Right ventricle myocardium inferior (tissue), 1 donor: ENCODE measurements at regions of chr22 and their contacts with region 1.

Region 1: GRCh38 chr22:40238425-40239344 is 61.0 kb downstream of the TNRC6B start:
- DNase-seq: no peak
- ATAC-seq: peak; percentile 29

Region 2: DNA sequence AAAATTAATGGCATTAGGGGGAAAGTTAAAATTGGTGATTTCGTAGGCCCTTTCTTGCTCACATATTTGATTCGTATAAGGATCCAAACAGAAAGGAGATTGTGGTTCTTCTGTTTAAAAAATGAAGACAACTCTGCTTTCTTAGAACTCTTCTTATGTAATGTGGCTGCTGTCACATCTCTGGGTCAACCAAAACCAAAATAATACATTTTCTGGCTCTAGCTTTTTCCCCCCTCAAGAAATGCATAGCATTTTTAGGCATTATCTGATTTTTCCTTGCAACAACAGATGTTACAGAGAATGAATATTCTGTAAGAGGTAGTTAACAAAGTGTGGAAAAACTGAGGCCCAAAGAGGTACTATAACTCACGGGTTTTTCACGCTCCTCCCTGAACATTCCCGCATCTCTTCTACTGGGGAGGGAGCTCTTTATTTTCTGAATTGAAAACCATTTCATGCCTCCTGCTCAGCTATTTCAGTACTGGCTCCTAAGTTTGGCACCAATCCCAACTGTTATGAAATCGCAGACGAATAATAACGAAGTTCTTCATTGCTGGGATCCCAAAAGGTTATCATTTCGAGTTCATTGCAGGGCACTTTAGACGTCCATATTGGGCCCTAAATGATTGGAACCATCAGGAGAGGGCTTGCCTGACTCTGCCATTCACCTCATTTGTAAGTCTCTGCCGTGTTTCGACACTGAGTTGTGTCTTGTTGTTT is 320.7 kb before region 1 on chr22:
- intact Hi-C with region 1: no loop called
- DNase-seq: no peak
- ATAC-seq: no peak

Region 3: GRCh38 chr22:40193429-40194421 is 45.0 kb before region 1 on chr22:
- intact Hi-C with region 1: loop called (anchors 5 kb)
- DNase-seq: no peak
- ATAC-seq: no peak

Region 4: DNA sequence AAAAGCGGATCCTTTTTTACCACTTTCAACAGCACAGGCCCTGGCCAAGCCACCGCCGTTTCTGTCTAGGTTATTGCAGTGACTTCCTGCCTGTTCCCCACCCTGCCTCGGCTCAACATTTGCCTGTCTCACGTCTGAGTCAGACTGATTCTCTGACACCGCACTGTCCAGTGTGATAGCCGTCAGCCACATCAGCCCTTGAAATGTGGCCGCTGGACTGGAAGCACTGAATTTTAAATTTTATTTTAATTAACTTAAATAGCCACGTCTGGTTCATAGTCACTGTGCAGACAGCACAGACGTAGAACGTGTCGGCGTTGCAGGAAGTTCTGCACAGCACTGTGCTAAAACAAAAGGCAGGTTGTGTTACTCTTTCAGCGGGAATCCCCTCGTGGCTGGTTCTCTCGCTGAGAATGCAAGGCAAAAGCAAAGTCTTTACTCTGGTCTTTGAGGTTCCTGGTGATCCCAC is 51.3 kb after region 1 on chr22:
- intact Hi-C with region 1: loop called (anchors 10 kb)
- DNase-seq: peak; percentile 81
- ATAC-seq: peak; percentile 28